ENCODE measurements at regions of chr7 and their contacts with region 1.

Region 1: GRCh38 chr7:2555121-2556052 is at the start of gene BRAT1:
- DNase-seq: peak; percentile 90 to 98 (median 96)
- ATAC-seq: peak; percentile 93
- H3K4me3 ChIP-seq: peak within 1 kb of the TSS; percentile 93
- H3K4me3 Mint-ChIP-seq: peak within 1 kb of the TSS; percentile 86
- H3K27ac ChIP-seq: peak within 1 kb of the TSS; percentile 98 to 99
- H3K27ac Mint-ChIP-seq: peak within 1 kb of the TSS; percentile 90
- H3K4me1 ChIP-seq: peaks cover 37% of the 10 kb centered on the region
- H3K4me1 Mint-ChIP-seq: peaks cover 47% of the 10 kb centered on the region
- H3K27me3 ChIP-seq: no peaks in the 10 kb centered on the region
- H3K27me3 Mint-ChIP-seq: no peaks in the 10 kb centered on the region
- CTCF ChIP-seq: peak; percentile 24
- total RNA-seq, gene BRAT1: 18.9 to 20.6 TPM

Region 2: DNA sequence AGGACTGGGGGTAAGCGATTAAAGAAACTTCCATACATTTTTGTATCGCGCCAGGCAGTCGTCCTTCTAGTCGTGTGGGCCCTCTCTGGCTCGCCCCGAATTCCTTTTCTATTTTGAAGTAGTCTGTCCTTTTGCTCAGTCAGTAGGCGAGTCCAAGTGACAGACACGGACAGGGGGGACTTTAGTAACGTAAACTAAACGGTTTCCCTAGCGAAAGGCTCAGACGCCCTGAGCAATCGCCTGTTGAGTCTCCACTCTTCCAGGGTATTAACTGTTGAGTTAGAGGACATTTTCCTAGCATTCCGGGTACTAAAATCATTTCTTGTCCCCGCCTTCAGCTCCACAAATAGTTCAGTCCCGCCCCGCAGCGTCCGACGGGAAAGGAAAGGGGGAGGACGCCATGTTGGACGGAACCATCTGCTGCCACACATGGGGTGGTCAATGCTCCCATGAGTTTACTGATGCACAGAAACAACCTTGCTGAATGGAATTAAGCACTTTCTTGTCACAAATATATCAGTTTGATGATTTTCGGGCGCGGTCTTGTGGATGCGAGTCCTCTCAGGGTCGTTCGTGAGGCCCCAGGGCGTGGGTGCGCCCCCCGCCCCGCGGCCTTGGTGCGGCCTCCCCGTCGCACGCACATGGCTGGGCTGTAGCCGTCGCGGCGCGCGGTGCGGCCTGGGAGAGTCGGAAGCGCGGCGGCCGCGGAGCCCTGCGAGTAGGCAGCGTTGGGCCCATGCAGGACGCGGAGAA is 201.0 kb before region 1 on chr7 and contains the start of gene EIF3B:
- CTCF ChIA-PET with region 1: no interaction called
- POLR2A ChIA-PET with region 1: no interaction called
- intact Hi-C with region 1: loop called in 1 of 2 experiments (anchors 1 kb)
- DNase-seq: peak; percentile 80 to 97 (median 90)
- ATAC-seq: peak; percentile 84
- H3K4me3 ChIP-seq: peak within 1 kb of the TSS; percentile 72 to 74
- H3K4me3 Mint-ChIP-seq: peak within 1 kb of the TSS; percentile 88
- H3K27ac ChIP-seq: peak within 1 kb of the TSS; percentile 99
- H3K27ac Mint-ChIP-seq: peak within 1 kb of the TSS; percentile 99
- H3K4me1 ChIP-seq: peaks cover 45% of the 10 kb centered on the region
- H3K4me1 Mint-ChIP-seq: peaks cover 40% of the 10 kb centered on the region
- H3K27me3 ChIP-seq: no peaks in the 10 kb centered on the region
- H3K27me3 Mint-ChIP-seq: no peaks in the 10 kb centered on the region
- CTCF ChIP-seq: no peak
- total RNA-seq, gene EIF3B: 234 to 239 TPM

Region 3: DNA sequence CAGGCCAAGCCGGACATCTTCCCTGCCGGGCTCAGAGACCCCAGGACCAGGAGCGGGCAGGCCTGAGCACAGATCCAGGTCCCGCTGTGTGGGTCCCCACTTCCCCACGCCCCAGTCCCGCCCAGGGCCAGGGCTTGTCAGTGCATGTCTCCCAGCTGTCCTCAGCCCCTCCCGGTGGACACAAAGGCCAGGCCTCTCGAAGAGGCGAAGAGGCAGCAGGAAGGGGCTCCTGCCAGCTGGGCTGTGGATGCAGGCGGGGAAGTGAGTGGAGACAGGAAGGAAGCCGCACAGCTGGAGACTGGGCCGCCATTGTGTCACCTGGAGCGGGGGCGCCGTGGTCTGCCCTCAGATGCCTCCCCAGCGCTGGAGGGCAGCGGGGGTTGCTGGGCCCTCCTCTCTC is 84.0 kb before region 1 on chr7:
- CTCF ChIA-PET with region 1: interaction called, 10 read pairs
- POLR2A ChIA-PET with region 1: no interaction called
- intact Hi-C with region 1: loop called in 1 of 2 experiments (anchors 5 kb)
- DNase-seq: no peak
- ATAC-seq: no peak
- H3K4me3 ChIP-seq: no peak overlapping the region
- H3K4me3 Mint-ChIP-seq: no peak overlapping the region
- H3K27ac ChIP-seq: no peak overlapping the region
- H3K27ac Mint-ChIP-seq: no peak overlapping the region
- H3K4me1 ChIP-seq: peaks cover 5% of the 10 kb centered on the region
- H3K4me1 Mint-ChIP-seq: peaks cover 2% of the 10 kb centered on the region
- H3K27me3 ChIP-seq: no peaks in the 10 kb centered on the region
- H3K27me3 Mint-ChIP-seq: peaks cover 2% of the 10 kb centered on the region
- CTCF ChIP-seq: no peak

Region 4: GRCh38 chr7:2508327-2509215 is 46.8 kb before region 1 on chr7:
- CTCF ChIA-PET with region 1: interaction called, 5 read pairs
- POLR2A ChIA-PET with region 1: interaction called, 6 read pairs
- intact Hi-C with region 1: loop called (anchors 1 kb)
- DNase-seq: peak; percentile 56 to 95 (median 84)
- ATAC-seq: peak; percentile 67
- H3K4me3 ChIP-seq: peak overlapping the region; percentile 27 to 47
- H3K4me3 Mint-ChIP-seq: peak overlapping the region; percentile 74
- H3K27ac ChIP-seq: peak overlapping the region; percentile 84 to 88
- H3K27ac Mint-ChIP-seq: peak overlapping the region; percentile 97
- H3K4me1 ChIP-seq: peaks cover 67% of the 10 kb centered on the region
- H3K4me1 Mint-ChIP-seq: peaks cover 64% of the 10 kb centered on the region
- H3K27me3 ChIP-seq: no peaks in the 10 kb centered on the region
- H3K27me3 Mint-ChIP-seq: no peaks in the 10 kb centered on the region
- CTCF ChIP-seq: no peak

Region 5: DNA sequence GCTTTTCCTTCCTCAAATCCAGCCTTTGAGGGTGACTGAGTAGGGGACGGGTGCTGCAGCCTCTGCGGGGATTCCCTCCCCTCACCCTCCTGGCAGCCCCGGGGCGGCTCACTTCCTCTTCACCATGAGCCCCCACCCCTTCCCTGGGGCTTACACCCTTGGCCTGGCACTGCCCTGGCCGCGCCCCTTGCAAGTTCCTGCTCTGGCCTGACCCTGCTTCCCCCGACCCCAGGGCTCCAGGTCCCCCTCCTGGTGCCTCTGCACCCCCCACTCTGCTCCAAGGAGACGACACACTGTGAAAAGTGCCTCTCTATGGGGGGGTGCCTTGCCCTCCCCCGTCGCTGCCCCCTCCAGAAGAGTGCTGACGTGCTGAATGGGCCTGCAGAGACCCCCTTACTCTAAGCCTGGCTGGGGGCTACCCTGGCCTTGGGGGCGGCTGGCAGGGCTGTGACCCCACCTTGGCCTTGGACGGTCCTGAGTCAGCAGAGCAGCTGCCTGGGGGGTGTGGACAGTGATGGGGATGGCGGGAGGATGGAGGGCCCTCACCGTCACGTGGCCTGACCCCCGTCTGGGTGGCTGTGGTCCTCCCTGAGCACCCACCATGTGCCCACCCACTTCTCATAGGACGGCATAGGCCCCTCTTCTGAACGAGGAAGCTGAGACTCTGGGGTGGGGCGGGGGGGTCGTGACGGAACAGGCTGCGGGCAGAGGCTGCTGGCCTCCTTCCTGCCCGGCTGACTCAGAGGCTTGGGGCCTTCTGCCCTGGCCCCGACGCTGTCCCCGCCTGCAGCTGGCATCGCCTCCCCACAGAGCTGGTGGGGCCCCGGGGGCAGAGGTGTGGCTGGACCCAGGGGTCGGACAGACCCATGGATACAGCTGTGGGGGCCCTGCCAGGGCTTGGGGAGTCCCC is 26.0 kb before region 1 on chr7:
- CTCF ChIA-PET with region 1: interaction called, 5 read pairs
- POLR2A ChIA-PET with region 1: interaction called, 3 read pairs
- intact Hi-C with region 1: loop called in 1 of 2 experiments (anchors 1 kb)
- DNase-seq: peak in 7 of 9 experiments; percentile 47 to 88 (median 70)
- ATAC-seq: peak; percentile 26
- H3K4me3 ChIP-seq: peak overlapping the region; percentile 46 to 63
- H3K4me3 Mint-ChIP-seq: peak overlapping the region; percentile 79
- H3K27ac ChIP-seq: peak overlapping the region; percentile 71 to 91
- H3K27ac Mint-ChIP-seq: peak overlapping the region; percentile 95
- H3K4me1 ChIP-seq: peaks cover 67% of the 10 kb centered on the region
- H3K4me1 Mint-ChIP-seq: peaks cover 55% of the 10 kb centered on the region
- H3K27me3 ChIP-seq: no peaks in the 10 kb centered on the region
- H3K27me3 Mint-ChIP-seq: no peaks in the 10 kb centered on the region
- CTCF ChIP-seq: no peak

Region 6: DNA sequence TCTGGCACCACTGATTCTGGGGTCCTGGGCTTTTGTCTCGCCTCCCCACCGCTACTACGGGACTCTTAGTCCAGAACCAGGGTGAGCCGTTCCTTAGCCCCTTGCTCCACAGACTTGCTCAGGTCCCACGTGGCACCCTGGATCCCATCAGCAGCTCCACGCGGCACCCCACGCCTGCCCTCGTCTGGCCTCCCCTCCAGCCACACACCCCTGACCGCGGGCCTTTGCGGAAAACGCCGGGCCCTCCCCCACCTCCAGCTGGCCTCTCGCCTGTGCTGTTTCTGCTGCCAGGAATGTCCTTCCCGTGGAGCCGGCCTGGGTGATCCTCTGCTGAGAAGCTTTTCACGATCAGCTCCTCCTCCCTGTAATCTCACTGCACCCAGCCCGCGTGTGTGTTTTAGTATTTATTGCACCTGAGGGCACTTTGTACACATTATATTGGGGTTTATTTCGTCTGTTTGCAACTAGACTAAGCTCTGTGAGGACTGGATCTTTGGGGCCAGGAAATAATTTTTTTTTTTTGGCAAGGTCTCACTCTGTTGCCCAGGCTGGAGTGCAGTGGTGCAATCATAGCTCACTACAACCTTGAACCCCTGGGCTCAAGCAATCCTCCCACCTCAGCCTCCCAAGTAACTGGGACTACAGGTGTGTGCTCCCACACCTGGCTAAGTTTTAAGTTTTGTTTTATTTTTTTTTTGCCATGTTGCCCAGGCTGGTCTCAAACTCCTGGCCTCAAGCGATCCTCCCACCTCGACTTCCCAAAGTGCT is 65.9 kb after region 1 on chr7:
- CTCF ChIA-PET with region 1: no interaction called
- POLR2A ChIA-PET with region 1: no interaction called
- intact Hi-C with region 1: no loop called
- DNase-seq: no peak
- ATAC-seq: no peak
- H3K4me3 ChIP-seq: no peak overlapping the region
- H3K4me3 Mint-ChIP-seq: no peak overlapping the region
- H3K27ac ChIP-seq: no peak overlapping the region
- H3K27ac Mint-ChIP-seq: no peak overlapping the region
- H3K4me1 ChIP-seq: no peaks in the 10 kb centered on the region
- H3K4me1 Mint-ChIP-seq: no peaks in the 10 kb centered on the region
- H3K27me3 ChIP-seq: no peaks in the 10 kb centered on the region
- H3K27me3 Mint-ChIP-seq: no peaks in the 10 kb centered on the region
- CTCF ChIP-seq: no peak

Region 7: GRCh38 chr7:2709553-2710285 is 154.3 kb after region 1 on chr7:
- CTCF ChIA-PET with region 1: interaction called, 3 read pairs
- POLR2A ChIA-PET with region 1: no interaction called
- intact Hi-C with region 1: loop called (anchors 10 kb)
- DNase-seq: peak; percentile 58 to 90 (median 76)
- ATAC-seq: peak; percentile 78
- H3K4me3 ChIP-seq: peak overlapping the region; percentile 31 to 38
- H3K4me3 Mint-ChIP-seq: peak overlapping the region; percentile 66
- H3K27ac ChIP-seq: no peak overlapping the region
- H3K27ac Mint-ChIP-seq: peak overlapping the region; percentile 62
- H3K4me1 ChIP-seq: peaks cover 32% of the 10 kb centered on the region
- H3K4me1 Mint-ChIP-seq: peaks cover 30% of the 10 kb centered on the region
- H3K27me3 ChIP-seq: peaks cover 7 to 9% of the 10 kb centered on the region in 2 experiments
- H3K27me3 Mint-ChIP-seq: peaks cover 8% of the 10 kb centered on the region
- CTCF ChIP-seq: peak; percentile 83